Motor neuron (in vitro differentiated cells): ENCODE measurements at regions of chr4 and their contacts with region 1.

Region 1: DNA sequence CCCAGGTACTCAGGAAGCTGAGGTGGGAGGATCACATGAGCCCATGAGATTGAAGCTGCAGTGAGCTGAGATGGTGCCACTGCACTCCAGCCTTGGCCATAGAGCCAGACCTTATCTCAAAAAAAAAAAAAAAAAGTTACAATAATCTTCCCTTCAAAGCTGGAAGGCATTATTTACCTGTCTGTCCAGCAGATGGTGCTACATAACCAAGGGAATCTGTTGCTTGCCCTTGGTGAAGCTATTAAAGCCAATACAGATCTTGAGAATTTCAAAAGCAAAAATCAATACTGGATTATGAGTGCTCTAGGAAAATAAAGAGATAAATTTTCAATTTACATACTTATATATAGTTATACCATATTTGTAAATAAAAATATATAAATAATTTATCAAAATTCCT is 25.9 kb downstream of the PKD2 start:
- ATAC-seq: peak in 4 of 8 experiments; percentile 49 to 66 (median 54)
- H3K4me3 ChIP-seq: no peak overlapping the region
- H3K27ac ChIP-seq: no peak overlapping the region
- H3K4me1 ChIP-seq: no peaks in the 10 kb centered on the region

Region 2: GRCh38 chr4:88211473-88212252 is 178.4 kb after region 1 on chr4:
- in situ Hi-C with region 1: loop called in 4 of 9 experiments (anchors 10 to 25 kb)
- ATAC-seq: peak in 7 of 8 experiments; percentile 33 to 69 (median 52)
- H3K4me3 ChIP-seq: no peak overlapping the region
- H3K27ac ChIP-seq: no peak overlapping the region
- H3K4me1 ChIP-seq: no peaks in the 10 kb centered on the region